ENCODE measurements at regions of chr13 and their contacts with region 1.

Region 1: DNA sequence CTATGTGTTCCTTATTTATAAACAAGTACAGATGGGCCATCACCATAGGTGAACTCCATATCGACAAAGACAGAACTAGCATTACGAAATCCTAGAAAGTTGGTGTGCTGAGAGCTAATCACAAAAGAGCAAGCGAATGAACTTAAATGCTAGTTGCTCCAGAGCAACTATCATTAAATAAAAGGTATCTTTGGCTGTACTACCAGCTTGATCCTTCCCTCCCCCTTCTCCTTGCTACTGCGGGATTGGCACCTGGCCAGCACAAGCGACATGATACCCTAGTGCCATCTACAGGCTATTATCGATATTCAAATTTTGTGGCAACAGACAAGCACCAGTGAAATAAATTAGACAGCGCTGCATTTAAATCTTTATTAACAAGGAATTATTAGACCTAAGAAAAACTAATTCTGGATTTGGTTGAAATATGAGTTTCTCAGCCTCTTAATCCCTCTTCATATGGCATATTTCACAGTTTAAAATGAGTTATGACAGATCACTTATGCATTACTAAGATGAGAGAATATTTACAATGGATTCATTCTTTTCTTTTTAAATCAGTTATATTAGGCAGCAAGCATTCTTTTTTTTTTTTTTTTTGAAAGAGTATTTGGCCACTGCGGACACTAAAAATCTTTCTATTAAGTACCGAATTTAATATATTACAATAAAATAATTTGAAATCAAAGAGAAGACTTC is 5.8 kb downstream of the PCDH9 start:
- DNase-seq: peak; percentile 79
- ATAC-seq: peak; percentile 65
- H3K4me3 Mint-ChIP-seq: no peak overlapping the region
- H3K27ac Mint-ChIP-seq: no peak overlapping the region
- H3K4me1 Mint-ChIP-seq: peaks cover 13% of the 10 kb centered on the region
- H3K27me3 Mint-ChIP-seq: peaks cover 5% of the 10 kb centered on the region

Region 2: DNA sequence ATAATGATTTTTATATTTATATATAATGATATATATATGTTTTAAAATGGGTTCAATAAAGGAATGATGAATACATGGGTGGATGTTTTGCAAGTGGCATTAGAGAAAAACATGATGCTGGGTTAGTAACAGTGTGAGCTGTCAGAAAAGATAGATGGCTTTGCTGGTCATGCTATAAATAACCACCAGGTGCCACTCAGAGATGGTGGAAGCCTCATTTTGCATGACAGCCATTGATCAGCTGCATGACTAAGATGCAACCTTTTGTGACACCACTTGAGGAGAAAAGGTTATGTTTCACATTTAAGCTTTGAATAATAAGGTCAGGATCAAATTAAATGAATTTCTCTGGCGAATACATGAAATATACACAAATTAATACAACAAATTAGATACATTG is 731.8 kb before region 1 on chr13:
- CTCF ChIA-PET with region 1: no interaction called
- POLR2A ChIA-PET with region 1: no interaction called
- intact Hi-C with region 1: loop called in 1 of 2 experiments (anchors 10 kb)
- DNase-seq: peak; percentile 10
- ATAC-seq: no peak
- H3K4me3 Mint-ChIP-seq: no peak overlapping the region
- H3K27ac Mint-ChIP-seq: no peak overlapping the region
- H3K4me1 Mint-ChIP-seq: no peaks in the 10 kb centered on the region
- H3K27me3 Mint-ChIP-seq: no peaks in the 10 kb centered on the region

Region 3: DNA sequence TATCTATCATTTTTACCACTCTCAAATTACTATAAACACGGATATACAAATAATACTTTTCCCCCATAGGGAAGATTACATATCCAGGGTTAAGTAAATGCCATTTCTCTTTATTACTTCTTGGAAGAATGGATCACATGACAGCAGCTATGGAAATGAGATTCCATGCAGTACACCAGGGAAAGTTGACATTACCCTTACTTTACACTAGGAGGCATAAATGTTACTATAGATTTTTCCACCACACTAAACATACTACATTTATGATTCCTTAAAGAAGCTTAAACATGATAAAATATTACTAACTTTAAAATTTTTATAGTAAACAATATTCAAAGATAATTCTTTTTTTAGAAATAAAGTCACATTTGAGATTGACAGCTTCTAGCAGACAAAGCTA is 605.6 kb before region 1 on chr13:
- CTCF ChIA-PET with region 1: no interaction called
- POLR2A ChIA-PET with region 1: no interaction called
- intact Hi-C with region 1: loop called in 1 of 2 experiments (anchors 5 kb)
- DNase-seq: no peak
- ATAC-seq: no peak
- H3K4me3 Mint-ChIP-seq: no peak overlapping the region
- H3K27ac Mint-ChIP-seq: no peak overlapping the region
- H3K4me1 Mint-ChIP-seq: no peaks in the 10 kb centered on the region
- H3K27me3 Mint-ChIP-seq: no peaks in the 10 kb centered on the region

Region 4: DNA sequence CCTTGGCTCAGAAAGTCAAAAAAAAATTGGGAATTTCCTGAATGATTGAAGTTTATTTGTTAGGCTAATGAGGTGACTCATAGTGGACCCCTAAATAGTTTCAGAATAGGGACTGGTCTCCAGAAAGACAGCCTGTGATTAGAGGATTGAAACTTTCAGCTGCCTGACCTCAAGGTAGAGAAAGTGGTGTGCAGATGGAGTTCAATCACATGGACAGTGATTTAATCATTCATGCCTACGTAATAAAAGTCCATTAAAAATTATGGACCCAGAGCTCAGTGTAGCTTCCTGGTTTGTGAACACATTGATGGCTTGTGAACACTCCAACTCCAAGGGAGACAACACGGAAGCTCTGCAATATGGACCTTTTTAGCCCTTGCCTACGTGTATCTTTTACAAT is 539.1 kb after region 1 on chr13:
- CTCF ChIA-PET with region 1: no interaction called
- POLR2A ChIA-PET with region 1: no interaction called
- intact Hi-C with region 1: no loop called
- DNase-seq: no peak
- ATAC-seq: no peak
- H3K4me3 Mint-ChIP-seq: no peak overlapping the region
- H3K27ac Mint-ChIP-seq: no peak overlapping the region
- H3K4me1 Mint-ChIP-seq: no peaks in the 10 kb centered on the region
- H3K27me3 Mint-ChIP-seq: no peaks in the 10 kb centered on the region